Mammary epithelial cell (primary cell): ENCODE measurements at regions of chr10 and their contacts with region 1.

Region 1: DNA sequence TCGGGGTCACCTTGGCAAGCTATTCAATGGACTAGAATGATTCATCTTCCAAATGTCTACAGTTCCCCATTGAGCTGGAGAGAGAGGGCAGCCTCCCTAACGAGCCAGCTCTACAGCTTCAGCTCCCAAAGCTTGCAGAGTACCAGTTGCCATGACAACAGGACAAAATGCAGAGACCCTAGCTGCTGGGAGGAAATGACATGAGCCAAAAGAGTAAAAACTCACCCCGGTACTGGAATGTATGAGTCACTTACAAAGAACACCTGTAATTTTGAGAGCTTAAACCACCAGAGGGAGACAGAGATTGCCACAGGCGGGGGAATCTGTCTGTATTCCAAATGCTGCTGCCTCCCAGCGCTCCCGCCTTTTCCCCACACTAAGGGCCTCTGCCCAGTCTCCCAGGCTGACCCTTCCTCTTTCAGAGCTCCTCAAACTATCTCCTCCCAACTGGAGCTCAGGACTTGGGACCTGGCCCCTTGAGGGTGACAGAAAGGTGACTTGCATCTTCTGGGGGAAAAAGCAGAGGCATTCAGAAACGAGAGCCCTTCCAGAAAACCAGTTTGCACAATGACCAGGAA is 95.5 kb downstream of the CUL2 start:
- DNase-seq: peak; percentile 80
- H3K4me3 ChIP-seq: no peak overlapping the region
- H3K27ac ChIP-seq: peak overlapping the region; percentile 59
- H3K4me1 ChIP-seq: peaks cover 28% of the 10 kb centered on the region
- H3K27me3 ChIP-seq: no peaks in the 10 kb centered on the region
- CTCF ChIP-seq: peak; percentile 66 to 92

Region 2: GRCh38 chr10:34666008-34666705 is 328.5 kb before region 1 on chr10:
- CTCF ChIA-PET with region 1: no interaction called
- dilution Hi-C with region 1: no loop called
- in situ Hi-C with region 1: no loop called
- intact Hi-C with region 1: loop called (anchors 1 kb)
- DNase-seq: peak; percentile 89
- H3K4me3 ChIP-seq: peak overlapping the region in 1 of 3 experiments; percentile 10
- H3K27ac ChIP-seq: peak overlapping the region; percentile 84
- H3K4me1 ChIP-seq: peaks cover 44% of the 10 kb centered on the region
- H3K27me3 ChIP-seq: no peaks in the 10 kb centered on the region
- CTCF ChIP-seq: peak; percentile 60 to 71

Region 3: DNA sequence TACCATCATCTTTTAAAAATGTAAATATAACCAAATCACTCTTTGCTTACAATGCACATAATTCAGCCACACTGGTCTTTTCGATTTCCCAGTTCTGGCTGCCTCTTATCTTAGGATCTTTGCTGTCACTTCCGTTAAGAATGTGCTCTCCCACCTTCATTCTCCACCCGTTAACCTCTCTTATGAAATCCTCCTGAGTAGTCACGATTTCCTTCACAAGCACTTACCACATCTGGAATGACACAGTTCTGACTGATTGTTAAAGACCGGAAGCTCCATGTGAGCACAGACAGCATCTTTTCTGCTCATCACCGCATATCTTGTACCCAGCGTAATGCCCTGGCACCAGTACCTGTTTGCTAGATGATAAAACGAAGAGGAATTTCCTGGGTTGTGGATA is 11.2 kb after region 1 on chr10:
- CTCF ChIA-PET with region 1: interaction called, 4 read pairs
- dilution Hi-C with region 1: no loop called
- in situ Hi-C with region 1: no loop called
- intact Hi-C with region 1: loop called (anchors 1 kb)
- DNase-seq: peak; percentile 100
- H3K4me3 ChIP-seq: no peak overlapping the region
- H3K27ac ChIP-seq: peak overlapping the region; percentile 80
- H3K4me1 ChIP-seq: peaks cover 26% of the 10 kb centered on the region
- H3K27me3 ChIP-seq: no peaks in the 10 kb centered on the region
- CTCF ChIP-seq: no peak

Region 4: GRCh38 chr10:35040760-35041501 is 46.3 kb after region 1 on chr10:
- CTCF ChIA-PET with region 1: no interaction called
- dilution Hi-C with region 1: loop called (anchors 5 kb)
- in situ Hi-C with region 1: no loop called
- intact Hi-C with region 1: no loop called
- DNase-seq: peak; percentile 46
- H3K4me3 ChIP-seq: no peak overlapping the region
- H3K27ac ChIP-seq: peak overlapping the region; percentile 5
- H3K4me1 ChIP-seq: peaks cover 20% of the 10 kb centered on the region
- H3K27me3 ChIP-seq: no peaks in the 10 kb centered on the region
- CTCF ChIP-seq: no peak

Region 5: DNA sequence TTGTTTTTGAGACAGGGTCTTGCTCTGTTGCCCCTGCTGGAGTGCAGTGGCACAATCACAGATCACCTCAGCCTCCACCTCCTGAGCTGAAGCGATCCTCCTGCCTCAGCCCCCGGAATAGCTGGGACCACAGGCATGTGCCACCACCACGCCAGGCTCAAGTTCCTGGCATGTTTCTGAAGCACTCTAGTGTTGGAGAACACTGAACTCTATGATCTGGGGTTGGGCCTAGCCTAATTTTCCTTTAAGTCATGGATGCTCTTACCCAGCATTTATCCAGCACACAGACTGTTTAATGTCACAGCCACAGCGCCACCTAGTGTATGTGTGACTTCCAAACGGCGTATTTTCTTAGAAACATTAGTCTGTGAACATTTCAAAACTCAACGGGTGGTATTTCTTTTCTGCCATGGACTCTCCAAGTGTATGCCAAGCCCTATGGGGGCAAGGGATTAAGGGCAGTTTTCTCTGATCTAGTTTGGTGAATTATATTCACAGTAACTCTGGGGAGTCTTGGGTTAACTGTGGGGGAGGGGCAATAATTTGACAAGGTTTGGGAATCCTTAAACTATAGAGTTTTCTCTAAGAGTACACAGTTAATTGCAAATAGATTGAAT is 223.8 kb after region 1 on chr10:
- CTCF ChIA-PET with region 1: no interaction called
- dilution Hi-C with region 1: no loop called
- in situ Hi-C with region 1: no loop called
- intact Hi-C with region 1: loop called (anchors 1 kb)
- DNase-seq: peak; percentile 65
- H3K4me3 ChIP-seq: no peak overlapping the region
- H3K27ac ChIP-seq: no peak overlapping the region
- H3K4me1 ChIP-seq: no peaks in the 10 kb centered on the region
- H3K27me3 ChIP-seq: no peaks in the 10 kb centered on the region
- CTCF ChIP-seq: peak; percentile 74 to 77